ENCODE measurements at regions of chr18 and their contacts with region 1.

Region 1: GRCh38 chr18:48951448-48952286 is 902 bp upstream of the SMAD7 start:
- DNase-seq: peak; percentile 87
- H3K4me3 ChIP-seq: peak overlapping the region; percentile 65 to 91 (median 91)
- H3K27ac ChIP-seq: peak overlapping the region; percentile 92
- H3K4me1 ChIP-seq: peaks cover 47% of the 10 kb centered on the region
- H3K27me3 ChIP-seq: no peaks in the 10 kb centered on the region
- CTCF ChIP-seq: peak in 1 of 2 donors; percentile 34

Region 2: GRCh38 chr18:48475635-48476549 is 475.8 kb before region 1 on chr18:
- CTCF ChIA-PET with region 1: no interaction called
- dilution Hi-C with region 1: no loop called
- in situ Hi-C with region 1: no loop called
- intact Hi-C with region 1: loop called (anchors 10 kb)
- DNase-seq: peak; percentile 57
- H3K4me3 ChIP-seq: no peak overlapping the region
- H3K27ac ChIP-seq: no peak overlapping the region
- H3K4me1 ChIP-seq: no peaks in the 10 kb centered on the region
- H3K27me3 ChIP-seq: no peaks in the 10 kb centered on the region
- CTCF ChIP-seq: peak; percentile 87 to 89

Region 3: GRCh38 chr18:48777026-48777743 is 174.5 kb before region 1 on chr18:
- CTCF ChIA-PET with region 1: no interaction called
- dilution Hi-C with region 1: no loop called
- in situ Hi-C with region 1: no loop called
- intact Hi-C with region 1: loop called (anchors 1 kb)
- DNase-seq: peak; percentile 12
- H3K4me3 ChIP-seq: no peak overlapping the region
- H3K27ac ChIP-seq: no peak overlapping the region
- H3K4me1 ChIP-seq: peaks cover 1% of the 10 kb centered on the region
- H3K27me3 ChIP-seq: no peaks in the 10 kb centered on the region
- CTCF ChIP-seq: peak; percentile 70 to 73

Region 4: DNA sequence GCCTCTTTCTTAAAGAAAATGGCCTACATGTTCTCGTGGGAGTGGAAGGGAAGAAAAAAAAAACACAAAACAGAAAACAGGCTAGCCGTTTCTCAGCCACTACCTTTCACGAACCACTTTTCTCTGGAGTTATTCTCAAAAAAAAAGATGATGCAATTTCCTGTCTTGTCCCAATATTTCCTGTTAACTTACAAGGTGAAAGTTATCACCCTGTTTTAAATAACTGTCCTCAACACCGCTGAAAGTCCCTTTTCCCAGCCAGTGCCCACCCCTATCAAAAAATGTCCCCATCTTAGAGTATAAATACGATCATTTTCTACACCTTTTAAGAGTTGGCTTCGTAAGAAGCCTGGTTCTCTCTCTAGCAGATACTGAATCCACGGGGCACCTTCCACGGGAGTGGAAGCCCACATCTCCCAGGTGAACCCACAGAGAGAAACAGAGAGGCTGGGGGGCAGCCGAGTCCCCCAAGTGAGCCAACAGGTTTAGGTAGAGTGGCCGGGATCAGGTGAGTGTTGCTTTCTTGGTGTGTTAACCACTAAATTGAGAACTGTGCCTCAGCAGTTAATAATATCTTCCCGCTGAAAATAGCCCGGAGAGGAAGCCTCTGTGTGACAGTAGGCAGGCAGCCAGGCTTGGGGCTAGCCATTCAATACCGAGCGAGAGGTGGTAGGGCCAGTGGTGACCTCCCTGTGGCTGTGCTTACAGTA is 16.8 kb before region 1 on chr18:
- CTCF ChIA-PET with region 1: no interaction called
- dilution Hi-C with region 1: no loop called
- in situ Hi-C with region 1: no loop called
- intact Hi-C with region 1: no loop called
- DNase-seq: no peak
- H3K4me3 ChIP-seq: no peak overlapping the region
- H3K27ac ChIP-seq: peak overlapping the region; percentile 71
- H3K4me1 ChIP-seq: peaks cover 78% of the 10 kb centered on the region
- H3K27me3 ChIP-seq: no peaks in the 10 kb centered on the region
- CTCF ChIP-seq: no peak

Region 5: GRCh38 chr18:49021433-49022129 is 69.9 kb after region 1 on chr18:
- CTCF ChIA-PET with region 1: no interaction called
- dilution Hi-C with region 1: no loop called
- in situ Hi-C with region 1: no loop called
- intact Hi-C with region 1: loop called (anchors 1 kb)
- DNase-seq: peak; percentile 84
- H3K4me3 ChIP-seq: no peak overlapping the region
- H3K27ac ChIP-seq: no peak overlapping the region
- H3K4me1 ChIP-seq: peaks cover 27% of the 10 kb centered on the region
- H3K27me3 ChIP-seq: no peaks in the 10 kb centered on the region
- CTCF ChIP-seq: peak; percentile 28 to 44

Region 6: DNA sequence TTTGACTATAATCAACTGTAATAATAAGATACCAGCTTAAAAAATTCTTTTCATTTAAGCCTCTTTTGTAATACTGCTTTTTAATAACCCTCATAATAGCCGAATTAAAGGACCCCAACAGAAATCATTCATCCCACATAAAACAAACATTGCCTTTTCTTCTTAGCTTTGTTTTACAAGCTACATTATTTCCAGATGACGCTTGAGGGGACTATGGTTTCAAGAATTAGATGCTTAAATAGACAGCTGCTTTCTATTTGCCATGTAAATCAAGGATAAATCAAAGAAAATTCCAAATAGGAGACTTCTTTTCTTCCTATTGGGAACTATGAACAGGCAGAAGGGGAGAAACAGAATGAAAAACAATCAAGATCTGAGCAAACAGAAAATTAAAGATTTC is 199.8 kb after region 1 on chr18:
- CTCF ChIA-PET with region 1: no interaction called
- dilution Hi-C with region 1: no loop called
- in situ Hi-C with region 1: no loop called
- intact Hi-C with region 1: no loop called
- DNase-seq: no peak
- H3K4me3 ChIP-seq: no peak overlapping the region
- H3K27ac ChIP-seq: no peak overlapping the region
- H3K4me1 ChIP-seq: no peaks in the 10 kb centered on the region
- H3K27me3 ChIP-seq: no peaks in the 10 kb centered on the region
- CTCF ChIP-seq: no peak

Region 7: GRCh38 chr18:49178736-49179135 is 227.1 kb after region 1 on chr18:
- CTCF ChIA-PET with region 1: no interaction called
- dilution Hi-C with region 1: no loop called
- in situ Hi-C with region 1: loop called in 1 of 2 experiments (anchors 10 kb)
- intact Hi-C with region 1: loop called (anchors 2 kb)
- DNase-seq: no peak
- H3K4me3 ChIP-seq: no peak overlapping the region
- H3K27ac ChIP-seq: no peak overlapping the region
- H3K4me1 ChIP-seq: peaks cover 5% of the 10 kb centered on the region
- H3K27me3 ChIP-seq: no peaks in the 10 kb centered on the region
- CTCF ChIP-seq: peak; percentile 52 to 64

Region 8: DNA sequence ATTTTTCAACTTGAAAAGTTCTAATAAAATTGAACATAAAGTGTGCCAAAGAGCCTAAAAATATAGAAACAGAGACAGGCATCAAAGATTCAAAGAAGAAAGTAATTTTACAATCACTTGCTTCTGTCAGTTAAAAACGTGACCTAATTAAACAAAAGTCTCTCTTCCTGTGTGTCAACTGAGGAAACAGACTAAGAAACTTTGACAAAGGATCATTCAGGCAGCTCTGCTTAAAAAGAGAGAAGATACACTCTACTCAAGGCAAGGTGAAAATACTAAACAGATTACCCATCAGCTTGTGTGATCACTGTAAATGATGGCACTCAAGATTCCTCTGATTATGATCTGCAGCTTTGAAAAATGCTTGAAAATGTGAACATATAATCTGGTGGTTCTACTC is 461.0 kb after region 1 on chr18:
- CTCF ChIA-PET with region 1: no interaction called
- dilution Hi-C with region 1: no loop called
- in situ Hi-C with region 1: no loop called
- intact Hi-C with region 1: loop called (anchors 5 kb)
- DNase-seq: no peak
- H3K4me3 ChIP-seq: no peak overlapping the region
- H3K27ac ChIP-seq: no peak overlapping the region
- H3K4me1 ChIP-seq: no peaks in the 10 kb centered on the region
- H3K27me3 ChIP-seq: no peaks in the 10 kb centered on the region
- CTCF ChIP-seq: no peak